ENCODE measurements at regions of chr12 and their contacts with region 1.

Region 1: DNA sequence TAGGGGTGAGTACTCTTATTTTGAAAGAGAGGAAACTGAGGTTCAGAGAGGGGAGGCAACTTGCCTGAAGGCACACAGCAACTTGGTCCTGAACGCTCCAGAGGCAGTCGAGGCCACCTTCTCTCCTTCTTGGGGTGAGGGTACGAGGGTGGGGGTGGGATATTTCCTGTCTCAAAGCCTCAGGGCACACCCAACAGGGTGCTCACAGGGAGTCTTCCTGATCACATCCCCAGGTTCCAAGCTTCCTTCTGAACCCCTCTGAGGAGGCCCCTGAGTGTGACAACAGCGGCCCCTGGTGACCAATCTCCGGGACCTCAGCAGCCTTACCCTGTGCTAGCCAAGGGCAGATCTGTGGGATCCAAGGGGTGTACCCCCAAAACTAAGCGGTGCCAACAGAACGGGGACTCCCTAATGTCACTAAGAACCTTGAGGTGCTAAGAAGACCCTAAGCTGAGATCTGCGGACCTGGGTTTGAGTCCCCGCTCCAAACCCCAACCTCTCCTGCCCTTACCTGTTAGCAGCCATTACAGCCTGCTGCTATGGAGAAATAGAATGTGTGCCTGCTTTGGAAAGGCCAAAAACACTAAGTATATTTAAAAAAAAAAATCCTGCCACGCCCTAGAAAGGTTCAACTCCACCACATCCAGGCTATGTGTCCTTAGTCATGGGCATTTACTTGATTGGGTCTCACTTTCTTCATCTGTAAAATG is 57.9 kb downstream of the TRPV4 start:
- DNase-seq: peak; percentile 73
- ATAC-seq: peak; percentile 77
- H3K4me3 ChIP-seq: no peak overlapping the region
- H3K4me3 Mint-ChIP-seq: no peak overlapping the region
- H3K27ac ChIP-seq: no peak overlapping the region
- H3K27ac Mint-ChIP-seq: no peak overlapping the region
- H3K4me1 ChIP-seq: no peaks in the 10 kb centered on the region
- H3K4me1 Mint-ChIP-seq: peaks cover 6% of the 10 kb centered on the region
- H3K27me3 ChIP-seq: no peaks in the 10 kb centered on the region
- H3K27me3 Mint-ChIP-seq: peaks cover 3% of the 10 kb centered on the region
- CTCF ChIP-seq: peak; percentile 80

Region 2: DNA sequence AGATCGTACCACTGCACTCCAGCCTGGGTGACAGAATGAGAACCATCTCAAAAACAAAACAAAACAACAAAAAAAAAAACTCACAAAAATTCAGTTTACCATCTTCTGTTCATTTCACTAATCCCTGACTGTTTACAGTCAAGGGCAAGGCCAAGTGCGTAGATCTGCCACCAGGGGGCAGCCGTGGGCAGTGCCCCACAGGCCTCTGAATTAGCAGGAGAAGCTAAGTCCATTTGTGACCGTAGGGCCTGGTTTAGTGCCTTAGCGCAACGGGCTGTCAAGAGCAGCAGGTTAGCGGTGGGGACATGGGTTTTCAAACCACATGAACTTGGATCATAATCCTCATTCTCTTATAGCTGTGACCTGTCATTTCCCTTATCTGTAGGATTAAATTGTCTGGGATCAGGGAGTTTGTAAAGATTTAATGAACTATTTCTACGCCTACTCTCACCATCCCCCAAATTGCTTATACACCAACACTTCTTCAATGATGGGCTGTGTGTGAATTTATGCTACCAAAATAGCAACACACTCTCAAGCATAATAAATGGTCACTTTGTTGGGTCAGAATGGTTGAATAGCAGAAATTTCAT is 347.2 kb before region 1 on chr12:
- CTCF ChIA-PET with region 1: interaction called, 16 read pairs
- POLR2A ChIA-PET with region 1: no interaction called
- intact Hi-C with region 1: no loop called
- DNase-seq: peak; percentile 76
- ATAC-seq: peak; percentile 83
- H3K4me3 ChIP-seq: no peak overlapping the region
- H3K4me3 Mint-ChIP-seq: no peak overlapping the region
- H3K27ac ChIP-seq: no peak overlapping the region
- H3K27ac Mint-ChIP-seq: no peak overlapping the region
- H3K4me1 ChIP-seq: peaks cover 4 to 6% of the 10 kb centered on the region in 2 donors
- H3K4me1 Mint-ChIP-seq: peaks cover 6% of the 10 kb centered on the region
- H3K27me3 ChIP-seq: peaks cover 0 to 11% (median 0%) of the 10 kb centered on the region in 4 experiments
- H3K27me3 Mint-ChIP-seq: peaks cover 7% of the 10 kb centered on the region
- CTCF ChIP-seq: peak; percentile 98

Region 3: DNA sequence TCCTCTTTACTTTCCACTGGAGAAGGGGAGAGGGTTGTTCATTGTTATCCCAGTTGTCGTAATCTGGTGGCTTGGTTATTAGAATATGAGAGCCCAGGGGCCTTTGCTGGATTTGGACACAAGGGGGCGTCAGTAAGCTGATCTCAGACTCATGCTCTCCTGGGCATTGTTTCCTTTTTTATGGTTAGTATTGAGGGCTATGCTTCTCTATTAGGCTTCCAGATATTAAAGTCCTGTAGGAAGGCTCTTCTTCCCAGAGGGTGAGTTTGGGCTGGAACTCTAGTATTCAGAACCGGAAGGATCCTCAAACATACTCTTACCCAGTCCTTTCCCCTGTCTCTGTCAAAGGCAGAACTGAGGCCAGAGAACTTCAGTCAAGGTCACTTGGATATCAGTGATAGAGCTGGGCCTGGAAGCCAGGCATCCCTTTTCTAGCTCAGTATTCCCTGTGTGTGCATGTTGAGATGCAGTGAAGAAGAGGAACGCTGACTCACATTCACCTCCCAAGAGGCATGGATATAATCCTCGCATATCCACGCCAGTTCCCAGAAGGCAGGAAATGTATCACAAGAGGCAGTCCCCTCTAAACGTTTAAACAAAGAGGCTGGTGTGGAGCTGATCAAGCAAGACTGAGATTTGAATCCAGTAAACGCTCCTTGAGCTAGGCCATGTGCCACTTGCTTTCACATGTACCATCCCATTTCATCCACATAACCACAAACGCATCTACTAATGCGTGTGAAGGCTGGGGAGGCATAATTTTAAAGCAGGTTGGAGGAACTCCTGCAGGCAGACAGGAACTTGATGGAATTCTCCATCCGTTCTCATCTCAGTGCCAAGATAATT is 256.3 kb before region 1 on chr12:
- CTCF ChIA-PET with region 1: interaction called, 66 read pairs
- POLR2A ChIA-PET with region 1: no interaction called
- intact Hi-C with region 1: no loop called
- DNase-seq: peak; percentile 55
- ATAC-seq: peak; percentile 41
- H3K4me3 ChIP-seq: no peak overlapping the region
- H3K4me3 Mint-ChIP-seq: no peak overlapping the region
- H3K27ac ChIP-seq: no peak overlapping the region
- H3K27ac Mint-ChIP-seq: no peak overlapping the region
- H3K4me1 ChIP-seq: no peaks in the 10 kb centered on the region
- H3K4me1 Mint-ChIP-seq: no peaks in the 10 kb centered on the region
- H3K27me3 ChIP-seq: no peaks in the 10 kb centered on the region
- H3K27me3 Mint-ChIP-seq: no peaks in the 10 kb centered on the region
- CTCF ChIP-seq: peak; percentile 82

Region 4: DNA sequence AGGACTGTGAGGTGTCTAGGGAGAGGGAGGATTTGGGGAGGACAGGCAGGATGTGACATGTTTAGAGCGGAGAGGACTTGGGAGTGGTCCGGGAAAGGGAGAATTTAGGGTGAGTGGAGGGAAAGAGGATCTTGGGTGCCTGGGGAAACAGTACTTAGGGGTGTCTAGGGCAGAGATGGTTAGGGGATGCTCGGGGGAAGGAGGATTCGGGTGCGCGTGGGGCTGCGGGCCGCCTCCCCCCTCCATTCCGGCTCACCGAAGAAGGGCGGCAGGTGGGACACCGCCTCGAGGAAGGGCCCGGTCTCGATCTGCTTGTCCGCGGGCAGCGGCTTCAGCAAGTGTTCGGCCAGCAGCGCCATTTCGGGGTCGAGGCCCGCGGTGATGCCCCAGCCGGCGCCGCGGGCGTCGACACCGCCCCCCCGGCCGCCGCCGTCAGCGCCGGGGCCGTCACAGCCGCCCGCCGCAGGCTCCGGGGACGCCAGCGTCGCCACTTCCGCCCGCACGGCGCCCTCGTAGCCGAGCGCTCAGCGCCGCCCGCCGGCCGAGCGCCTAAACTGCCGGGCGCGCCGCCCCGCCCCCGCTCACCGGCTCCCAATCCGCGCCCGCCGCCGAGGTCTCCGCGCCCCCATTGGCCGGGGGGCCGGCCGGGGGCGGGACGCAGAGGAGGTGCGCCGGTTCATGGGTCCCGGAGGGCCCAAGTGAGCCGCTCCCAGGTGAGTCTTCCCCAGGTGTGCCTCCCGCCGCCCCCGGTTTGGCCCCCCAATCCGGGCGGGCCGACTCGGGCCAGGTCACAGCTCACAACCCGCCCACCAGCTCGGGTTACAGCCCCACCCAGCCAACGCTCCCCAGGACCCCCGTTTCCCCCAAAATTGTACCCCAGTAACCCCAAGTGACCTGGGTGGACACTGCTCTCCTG is 104.9 kb after region 1 on chr12 and contains the start of gene GLTP:
- CTCF ChIA-PET with region 1: no interaction called
- POLR2A ChIA-PET with region 1: no interaction called
- intact Hi-C with region 1: no loop called
- DNase-seq: peak; percentile 95
- ATAC-seq: peak; percentile 98
- H3K4me3 ChIP-seq: peak within 1 kb of the TSS; percentile 73 to 91 (median 80)
- H3K4me3 Mint-ChIP-seq: peak within 1 kb of the TSS; percentile 83
- H3K27ac ChIP-seq: peak within 1 kb of the TSS; percentile 77 to 94
- H3K27ac Mint-ChIP-seq: peak within 1 kb of the TSS; percentile 84
- H3K4me1 ChIP-seq: peaks cover 36 to 43% of the 10 kb centered on the region in 2 donors
- H3K4me1 Mint-ChIP-seq: peaks cover 54% of the 10 kb centered on the region
- H3K27me3 ChIP-seq: no peaks in the 10 kb centered on the region
- H3K27me3 Mint-ChIP-seq: no peaks in the 10 kb centered on the region
- CTCF ChIP-seq: peak; percentile 55
- total RNA-seq, gene GLTP: 21.9 and 24.9 TPM in 2 replicates

Measured in B cell (primary cell).